Activated T-helper 1 cell treated with anti-CD3 and anti-CD28 coated beads, Interleukin-12 subunit alpha, Interleukin-12 subunit beta, Interleukin-2, Interleukin-4 antibody, amounts not matched to agents 30 ng/mL and 10 ng/mL and 1 ng/mL, durations not matched to agents 14 hours and 24 hours and 36 hours (primary cell): ENCODE measurements at regions of chr12 and their contacts with region 1.

Region 1: GRCh38 chr12:123365025-123365917 is 624 bp upstream of the SBNO1 start:
- DNase-seq: peak; percentile 97
- H3K4me3 Mint-ChIP-seq: peak overlapping the region; percentile 82
- H3K27ac Mint-ChIP-seq: peak overlapping the region; percentile 96
- H3K4me1 Mint-ChIP-seq: peaks cover 19% of the 10 kb centered on the region
- H3K27me3 Mint-ChIP-seq: no peaks in the 10 kb centered on the region

Region 2: DNA sequence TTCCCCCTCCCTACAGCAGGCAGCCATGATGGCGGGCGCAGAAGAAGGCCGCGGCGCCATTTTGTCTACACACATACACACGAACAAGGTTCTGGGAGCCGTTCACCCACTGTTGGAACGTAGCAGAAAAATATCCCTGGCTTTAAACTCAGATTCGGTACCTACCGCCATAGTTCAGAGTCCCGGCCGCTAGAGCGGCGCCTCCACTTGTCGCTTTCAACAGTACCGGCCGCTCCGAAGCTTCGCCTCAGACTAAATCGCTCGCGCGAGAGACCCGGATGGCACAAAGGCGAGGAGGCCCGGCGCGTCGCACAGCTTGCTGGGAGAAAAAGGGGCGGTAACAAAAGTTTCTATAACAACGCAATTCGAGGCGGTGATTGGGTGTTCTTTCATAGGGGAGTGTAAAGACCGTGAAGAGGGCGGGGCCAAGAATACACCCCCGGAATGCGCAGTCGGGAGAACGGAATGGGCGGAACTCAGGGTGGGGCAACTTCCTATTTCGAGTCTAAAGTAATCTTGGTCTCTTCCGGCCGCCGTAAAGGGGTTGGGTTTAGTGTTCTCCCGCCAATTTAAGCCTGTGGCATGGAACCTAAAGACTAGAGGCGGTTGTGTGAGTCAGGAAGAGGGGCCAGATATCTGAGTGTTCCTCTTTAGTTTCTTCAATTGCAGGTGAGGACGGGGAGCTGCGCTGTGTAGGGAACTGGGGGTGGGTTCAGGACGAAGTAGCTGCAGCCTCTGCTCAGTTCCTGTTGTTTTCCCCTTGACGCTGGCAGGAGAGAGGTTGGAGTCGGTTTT is 838.4 kb before region 1 on chr12 and contains the starts of genes KNTC1 and RSRC2:
- intact Hi-C with region 1: loop called (anchors 1 kb)
- DNase-seq: peak; percentile 99
- H3K4me3 Mint-ChIP-seq: no peak within 1 kb of the TSS
- H3K27ac Mint-ChIP-seq: no peak within 1 kb of the TSS
- H3K4me1 Mint-ChIP-seq: peaks cover 43% of the 10 kb centered on the region
- H3K27me3 Mint-ChIP-seq: no peaks in the 10 kb centered on the region
- total RNA-seq, gene KNTC1: 122 and 126 TPM in 2 replicates
- total RNA-seq, gene RSRC2: 101 and 103 TPM in 2 replicates

Region 3: GRCh38 chr12:122974274-122974891 is 390.9 kb before region 1 on chr12:
- intact Hi-C with region 1: loop called (anchors 1 kb)
- DNase-seq: peak; percentile 98
- H3K4me3 Mint-ChIP-seq: peak overlapping the region; percentile 98
- H3K27ac Mint-ChIP-seq: peak overlapping the region; percentile 98
- H3K4me1 Mint-ChIP-seq: peaks cover 12% of the 10 kb centered on the region
- H3K27me3 Mint-ChIP-seq: peaks cover 3% of the 10 kb centered on the region

Region 4: DNA sequence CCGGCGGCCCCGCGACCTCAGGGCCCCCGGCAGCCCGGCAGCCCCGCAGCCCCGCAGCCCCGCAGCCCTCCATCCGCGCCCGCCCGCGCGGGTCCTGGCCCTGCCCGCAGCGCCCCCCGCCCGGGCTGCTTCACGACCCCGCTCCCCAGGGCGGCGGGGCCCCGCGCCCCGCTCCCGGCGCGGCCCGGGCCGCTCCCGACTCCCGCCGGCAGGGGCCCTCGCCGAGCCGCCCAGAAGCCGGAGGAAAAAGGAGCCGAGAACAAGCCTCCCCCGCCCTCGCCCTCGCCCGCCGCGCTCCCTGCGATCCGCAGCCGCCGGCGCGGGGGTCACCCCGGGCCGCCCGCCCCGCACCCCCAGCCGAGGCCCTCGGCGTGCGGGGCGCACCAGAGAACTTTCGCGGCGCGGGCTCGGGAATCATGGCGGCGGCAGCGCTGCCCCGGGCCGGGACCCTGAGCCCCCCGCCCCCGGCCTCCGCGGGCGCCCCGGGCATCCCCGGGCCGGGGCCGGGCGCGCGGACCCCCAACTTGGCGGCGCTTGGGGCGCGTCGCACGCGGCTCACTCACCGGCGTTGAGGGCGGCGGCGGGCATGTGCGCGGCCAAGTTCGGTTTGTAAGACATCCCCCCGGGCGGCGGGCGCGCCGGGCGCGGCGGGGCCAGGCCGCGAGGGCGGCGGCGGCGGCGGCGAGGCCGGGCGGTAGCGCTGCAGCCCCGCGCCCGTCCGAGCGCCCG is 94.1 kb before region 1 on chr12:
- intact Hi-C with region 1: loop called (anchors 1 kb)
- DNase-seq: peak; percentile 68
- H3K4me3 Mint-ChIP-seq: no peak overlapping the region
- H3K27ac Mint-ChIP-seq: no peak overlapping the region
- H3K4me1 Mint-ChIP-seq: peaks cover 9% of the 10 kb centered on the region
- H3K27me3 Mint-ChIP-seq: peaks cover 5% of the 10 kb centered on the region

Region 5: GRCh38 chr12:123436017-123436964 is 71.0 kb after region 1 on chr12 and contains the start of gene RILPL2:
- intact Hi-C with region 1: loop called (anchors 1 kb)
- DNase-seq: peak; percentile 91
- H3K4me3 Mint-ChIP-seq: peak within 1 kb of the TSS; percentile 99
- H3K27ac Mint-ChIP-seq: peak within 1 kb of the TSS; percentile 99
- H3K4me1 Mint-ChIP-seq: peaks cover 39% of the 10 kb centered on the region
- H3K27me3 Mint-ChIP-seq: no peaks in the 10 kb centered on the region
- total RNA-seq, gene RILPL2: 20.1 and 20.6 TPM in 2 replicates

Region 6: GRCh38 chr12:123601602-123602489 is 236.6 kb after region 1 on chr12 and contains the start of gene DDX55:
- intact Hi-C with region 1: loop called (anchors 5 kb)
- DNase-seq: peak; percentile 83
- H3K4me3 Mint-ChIP-seq: peak within 1 kb of the TSS; percentile 87
- H3K27ac Mint-ChIP-seq: peak within 1 kb of the TSS; percentile 90
- H3K4me1 Mint-ChIP-seq: peaks cover 36% of the 10 kb centered on the region
- H3K27me3 Mint-ChIP-seq: no peaks in the 10 kb centered on the region
- total RNA-seq, gene DDX55: 72.1 and 72.3 TPM in 2 replicates